A549 (cell line): ENCODE measurements at regions of chr3 and their contacts with region 1.

Region 1: DNA sequence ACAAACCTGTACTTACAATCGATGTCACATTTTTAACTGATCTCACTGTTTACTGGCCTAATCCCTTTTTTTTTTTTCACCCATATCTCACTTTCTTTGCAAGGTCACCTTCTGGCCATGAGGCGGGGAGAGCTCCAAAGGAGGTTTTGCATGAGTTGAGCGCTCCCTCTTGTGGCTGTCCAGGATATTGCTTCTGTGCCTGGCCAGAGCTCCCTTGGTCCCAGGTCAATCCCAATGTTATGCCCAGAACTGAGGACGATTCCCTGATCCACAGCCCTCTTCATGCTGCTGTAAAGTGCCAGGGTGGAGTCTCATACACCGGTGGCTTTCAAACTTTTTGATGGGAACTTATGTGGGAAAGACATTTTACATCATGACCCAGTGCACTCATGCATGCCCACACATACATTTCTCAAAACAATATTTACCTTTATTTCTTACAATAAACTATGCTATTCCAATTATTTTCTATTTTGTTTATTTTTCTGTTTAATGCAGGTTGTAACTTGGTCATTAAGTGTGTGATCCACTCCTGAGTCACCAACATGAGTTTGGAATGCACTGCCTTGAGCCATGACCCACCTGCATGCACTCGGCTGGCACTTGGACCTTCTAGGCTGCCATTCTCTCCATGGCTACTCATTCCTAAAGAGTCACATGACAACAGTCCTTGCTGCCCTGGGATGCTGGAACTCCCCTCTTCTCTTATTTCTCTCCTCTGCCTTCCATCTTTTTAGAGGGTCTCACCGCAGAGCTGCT is 9.6 kb upstream of the SST start:
- DNase-seq: peak; percentile 41 to 66
- ATAC-seq: peak; percentile 94 to 97
- H3K4me3 ChIP-seq: no peak overlapping the region
- H3K27ac ChIP-seq: no peak overlapping the region
- H3K4me1 ChIP-seq: no peaks in the 10 kb centered on the region
- CTCF ChIP-seq: peak; percentile 75
- EP300 ChIP-seq: no peak
- POLR2A ChIP-seq: no peak
- RAD21 ChIP-seq: peak; percentile 79 to 89

Region 2: GRCh38 chr3:187227658-187228258 is 452.1 kb before region 1 on chr3:
- CTCF ChIA-PET with region 1: interaction called, 195 read pairs
- POLR2A ChIA-PET with region 1: no interaction called
- DNase-seq: peak; percentile 30 to 33
- ATAC-seq: peak; percentile 86 to 93
- H3K4me3 ChIP-seq: no peak overlapping the region
- H3K27ac ChIP-seq: peak overlapping the region in 1 of 2 experiments; percentile 19; a peak in 1 of 6 replicates
- H3K4me1 ChIP-seq: peaks cover 14% of the 10 kb centered on the region
- CTCF ChIP-seq: no peak
- EP300 ChIP-seq: no peak
- POLR2A ChIP-seq: no peak
- RAD21 ChIP-seq: no peak

Region 3: DNA sequence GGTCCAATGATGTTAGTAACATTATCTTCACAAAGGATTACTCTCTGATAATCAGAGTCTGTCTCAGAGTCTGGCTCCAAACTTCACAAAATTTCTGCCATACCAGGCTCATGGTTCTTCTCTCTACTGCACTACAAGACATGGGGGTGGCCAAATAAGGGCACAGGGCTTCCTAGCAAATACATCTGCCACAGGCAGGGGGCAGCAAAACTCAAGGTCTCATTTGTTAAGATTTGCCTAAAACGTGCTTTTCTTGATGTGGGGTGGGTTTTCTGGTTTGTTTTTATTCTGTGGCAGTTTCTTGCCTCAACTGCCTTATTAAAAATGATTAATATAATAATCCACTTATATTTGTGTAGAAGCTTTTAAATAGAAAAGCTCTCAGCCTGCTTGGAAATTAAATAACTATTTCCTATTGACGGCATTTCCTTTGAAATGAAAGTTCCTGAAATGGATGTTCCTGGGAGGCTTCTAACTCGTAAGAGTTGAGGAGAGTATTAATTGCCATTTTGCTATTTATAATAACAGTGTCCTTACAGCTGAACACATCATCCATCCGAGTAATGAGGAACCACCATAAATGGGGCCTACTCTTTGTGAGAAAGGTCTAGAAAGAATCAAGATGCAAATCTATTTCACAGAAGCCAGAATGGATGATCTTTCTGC is 63.4 kb before region 1 on chr3:
- CTCF ChIA-PET with region 1: interaction called, 16 read pairs
- POLR2A ChIA-PET with region 1: no interaction called
- DNase-seq: peak; percentile 18 to 61
- ATAC-seq: peak in 1 of 2 experiments; percentile 76; a peak in 3 of 6 replicates
- H3K4me3 ChIP-seq: no peak overlapping the region
- H3K27ac ChIP-seq: no peak overlapping the region
- H3K4me1 ChIP-seq: no peaks in the 10 kb centered on the region
- CTCF ChIP-seq: peak; percentile 58
- EP300 ChIP-seq: no peak
- POLR2A ChIP-seq: no peak
- RAD21 ChIP-seq: peak; percentile 48 to 52

Region 4: GRCh38 chr3:187689984-187690383 is 10.2 kb after region 1 on chr3:
- CTCF ChIA-PET with region 1: interaction called, 24 read pairs
- POLR2A ChIA-PET with region 1: no interaction called
- DNase-seq: no peak
- ATAC-seq: no peak
- H3K4me3 ChIP-seq: no peak overlapping the region
- H3K27ac ChIP-seq: no peak overlapping the region
- H3K4me1 ChIP-seq: no peaks in the 10 kb centered on the region
- CTCF ChIP-seq: no peak
- EP300 ChIP-seq: no peak
- POLR2A ChIP-seq: no peak
- RAD21 ChIP-seq: no peak

Region 5: GRCh38 chr3:187719628-187720336 is 40.0 kb after region 1 on chr3:
- CTCF ChIA-PET with region 1: interaction called, 16 read pairs
- POLR2A ChIA-PET with region 1: no interaction called
- DNase-seq: no peak
- ATAC-seq: no peak
- H3K4me3 ChIP-seq: no peak overlapping the region
- H3K27ac ChIP-seq: no peak overlapping the region
- H3K4me1 ChIP-seq: no peaks in the 10 kb centered on the region
- CTCF ChIP-seq: no peak
- EP300 ChIP-seq: no peak
- POLR2A ChIP-seq: no peak
- RAD21 ChIP-seq: no peak